Head of caudate nucleus (tissue), 42 donors: ENCODE measurements at regions of chr3 and their contacts with region 1.

Region 1: DNA sequence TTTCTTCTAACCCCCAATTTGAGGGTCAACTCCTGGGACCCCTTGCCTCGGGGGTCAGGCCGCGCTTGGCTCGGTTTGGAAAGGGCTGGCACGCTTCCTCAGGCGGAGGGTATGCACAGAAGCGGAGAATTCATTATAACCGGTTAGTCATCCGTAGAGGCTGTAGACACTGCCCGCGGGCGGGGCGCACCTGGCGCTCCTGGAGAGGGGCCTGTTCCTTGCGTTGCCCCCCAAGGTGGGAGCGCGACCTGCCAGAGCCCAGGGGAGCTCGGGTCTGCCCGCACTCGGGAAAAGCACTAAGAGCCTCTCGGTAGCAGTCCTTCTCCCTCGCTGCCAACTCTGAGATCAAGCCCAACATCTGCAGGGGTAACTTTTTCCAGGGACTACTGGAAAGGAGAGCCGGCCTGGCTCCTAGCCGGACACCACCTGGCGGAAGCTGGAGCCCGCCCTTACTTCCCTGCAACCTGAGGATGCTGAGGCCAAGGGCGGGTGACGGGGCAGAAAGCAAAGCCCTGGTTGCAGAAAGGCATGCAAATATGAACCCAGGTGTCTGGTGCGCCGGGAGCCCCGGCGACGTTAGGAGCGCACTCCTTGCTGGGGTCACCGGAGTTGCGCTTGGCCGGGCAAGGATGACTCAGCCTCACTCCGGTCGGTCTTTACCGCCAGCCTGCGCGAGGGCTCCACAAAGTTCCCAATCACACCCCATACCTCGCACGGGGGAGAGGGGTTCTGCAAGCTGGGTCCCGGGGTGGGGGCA is 1.5 kb upstream of the CACNA2D3 start:
- DNase-seq: peak in 24 of 42 donors; percentile 19 to 60 (median 40)

Region 2: GRCh38 chr3:53709860-53710674 is 410.8 kb before region 1 on chr3:
- intact Hi-C with region 1: no loop called
- DNase-seq: peak; percentile 34 to 85 (median 69)

Region 3: GRCh38 chr3:53941956-53942355 is 178.9 kb before region 1 on chr3:
- intact Hi-C with region 1: loop called (anchors 10 kb)
- DNase-seq: peak in 5 of 42 donors; percentile 18 to 34 (median 26)